A673 (cell line): ENCODE measurements at regions of chr7 and their contacts with region 1.

Region 1: GRCh38 chr7:90749262-90749661 is 153.1 kb downstream of the CDK14 start:
- DNase-seq: no peak
- H3K4me3 ChIP-seq: no peak overlapping the region
- H3K27ac ChIP-seq: no peak overlapping the region
- H3K4me1 ChIP-seq: peaks cover 23% of the 10 kb centered on the region
- H3K27me3 ChIP-seq: no peaks in the 10 kb centered on the region
- CTCF ChIP-seq: no peak

Region 2: GRCh38 chr7:90271753-90272152 is 477.5 kb before region 1 on chr7:
- CTCF ChIA-PET with region 1: no interaction called
- POLR2A ChIA-PET with region 1: no interaction called
- intact Hi-C with region 1: no loop called
- DNase-seq: peak; percentile 10
- H3K4me3 ChIP-seq: no peak overlapping the region
- H3K27ac ChIP-seq: no peak overlapping the region
- H3K4me1 ChIP-seq: peaks cover 21% of the 10 kb centered on the region
- H3K27me3 ChIP-seq: no peaks in the 10 kb centered on the region
- CTCF ChIP-seq: no peak

Region 3: GRCh38 chr7:90455163-90456030 is 293.9 kb before region 1 on chr7:
- CTCF ChIA-PET with region 1: interaction called, 4 read pairs
- POLR2A ChIA-PET with region 1: no interaction called
- intact Hi-C with region 1: loop called (anchors 10 kb)
- DNase-seq: peak; percentile 76
- H3K4me3 ChIP-seq: peak overlapping the region; percentile 11
- H3K27ac ChIP-seq: peak overlapping the region; percentile 9
- H3K4me1 ChIP-seq: peaks cover 12% of the 10 kb centered on the region
- H3K27me3 ChIP-seq: no peaks in the 10 kb centered on the region
- CTCF ChIP-seq: peak; percentile 82

Region 4: GRCh38 chr7:90512821-90513254 is 236.4 kb before region 1 on chr7:
- CTCF ChIA-PET with region 1: no interaction called
- POLR2A ChIA-PET with region 1: interaction called, 13 read pairs
- intact Hi-C with region 1: no loop called
- DNase-seq: no peak
- H3K4me3 ChIP-seq: no peak overlapping the region
- H3K27ac ChIP-seq: no peak overlapping the region
- H3K4me1 ChIP-seq: peaks cover 9% of the 10 kb centered on the region
- H3K27me3 ChIP-seq: no peaks in the 10 kb centered on the region
- CTCF ChIP-seq: no peak

Region 5: DNA sequence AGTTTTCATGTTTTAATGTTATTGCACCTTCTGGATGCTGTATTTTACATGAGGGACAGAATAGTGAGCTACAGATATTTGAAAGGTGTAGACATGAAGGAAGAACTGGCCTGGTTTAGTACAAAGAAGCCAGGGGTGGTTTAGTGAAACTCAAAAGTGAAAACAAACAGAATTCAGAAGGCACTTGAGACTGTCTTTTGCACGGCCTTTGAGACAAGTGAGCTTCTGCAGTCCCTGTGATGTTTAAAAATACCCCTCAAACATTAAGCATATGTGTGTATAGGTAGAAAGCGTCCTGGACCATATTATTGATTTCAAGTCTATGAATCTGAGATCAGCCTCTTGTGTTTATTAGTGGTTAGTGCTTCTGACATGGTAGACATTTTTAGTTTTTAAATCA is 34.2 kb before region 1 on chr7:
- CTCF ChIA-PET with region 1: no interaction called
- POLR2A ChIA-PET with region 1: interaction called, 11 read pairs
- intact Hi-C with region 1: no loop called
- DNase-seq: no peak
- H3K4me3 ChIP-seq: no peak overlapping the region
- H3K27ac ChIP-seq: peak overlapping the region; percentile 31
- H3K4me1 ChIP-seq: peaks cover 83% of the 10 kb centered on the region
- H3K27me3 ChIP-seq: no peaks in the 10 kb centered on the region
- CTCF ChIP-seq: no peak